Activated T-helper 2 cell treated with anti-CD3 and anti-CD28 coated beads, Interferon-gamma antibody, Interleukin-2, Interleukin-4, amounts not matched to agents 10 μg/mL and 5 μg/mL and 100 μg/mL, durations not matched to agents 14 hours and 24 hours and 36 hours (primary cell): ENCODE measurements at regions of chrX and their contacts with region 1.

Region 1: DNA sequence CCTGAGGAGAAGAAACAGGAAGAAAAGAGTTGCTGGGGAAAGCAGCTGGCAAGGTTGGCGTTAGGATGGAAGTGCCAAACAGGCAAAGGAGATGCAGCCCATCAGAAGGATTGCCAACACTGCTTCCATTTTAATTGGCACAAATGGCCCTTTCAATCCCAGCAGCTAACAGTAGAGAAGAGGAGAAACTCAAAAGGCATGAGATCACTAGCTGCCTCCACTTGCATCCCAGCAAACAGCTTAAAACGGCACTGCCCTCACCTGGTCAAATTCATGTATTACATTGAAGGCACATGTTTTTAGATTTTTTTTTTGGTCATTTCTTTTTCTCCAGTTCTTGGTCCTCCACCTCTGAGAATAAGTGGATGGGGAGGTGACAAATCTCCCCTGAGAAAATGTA is 14.9 kb upstream of the LOC101059915 start:
- DNase-seq: peak; percentile 22
- H3K4me3 Mint-ChIP-seq: no peak overlapping the region
- H3K27ac Mint-ChIP-seq: no peak overlapping the region
- H3K4me1 Mint-ChIP-seq: peaks cover 5% of the 10 kb centered on the region
- H3K27me3 Mint-ChIP-seq: peaks cover 1% of the 10 kb centered on the region

Region 2: GRCh38 chrX:71579990-71580380 is 72.4 kb before region 1 on chrX:
- intact Hi-C with region 1: loop called (anchors 5 kb)
- DNase-seq: no peak
- H3K4me3 Mint-ChIP-seq: no peak overlapping the region
- H3K27ac Mint-ChIP-seq: peak overlapping the region; percentile 58
- H3K4me1 Mint-ChIP-seq: peaks cover 2% of the 10 kb centered on the region
- H3K27me3 Mint-ChIP-seq: no peaks in the 10 kb centered on the region

Region 3: DNA sequence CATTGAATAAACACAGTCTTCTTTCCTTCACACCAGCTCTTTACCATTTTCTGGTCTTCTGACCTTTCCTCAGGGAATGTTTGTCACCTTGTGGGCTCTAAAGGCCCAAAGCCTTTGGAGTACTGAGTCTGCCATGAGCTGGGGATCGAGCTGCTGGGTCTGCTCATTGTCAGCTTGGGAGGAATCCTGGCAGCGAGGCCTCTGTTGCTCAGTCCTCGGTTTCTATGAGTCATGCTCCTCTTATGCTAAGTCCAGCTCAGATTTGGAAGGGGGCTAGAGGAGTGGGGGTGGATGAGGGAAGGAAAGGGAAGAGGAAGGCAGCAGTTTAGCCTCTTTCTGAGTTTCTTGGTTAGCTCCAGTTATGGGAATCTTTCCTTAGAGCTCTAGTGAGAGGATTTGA is 289.4 kb after region 1 on chrX:
- intact Hi-C with region 1: no loop called
- DNase-seq: no peak
- H3K4me3 Mint-ChIP-seq: no peak overlapping the region
- H3K27ac Mint-ChIP-seq: no peak overlapping the region
- H3K4me1 Mint-ChIP-seq: no peaks in the 10 kb centered on the region
- H3K27me3 Mint-ChIP-seq: no peaks in the 10 kb centered on the region